ENCODE measurements at regions of chr14 and their contacts with region 1.

Region 1: DNA sequence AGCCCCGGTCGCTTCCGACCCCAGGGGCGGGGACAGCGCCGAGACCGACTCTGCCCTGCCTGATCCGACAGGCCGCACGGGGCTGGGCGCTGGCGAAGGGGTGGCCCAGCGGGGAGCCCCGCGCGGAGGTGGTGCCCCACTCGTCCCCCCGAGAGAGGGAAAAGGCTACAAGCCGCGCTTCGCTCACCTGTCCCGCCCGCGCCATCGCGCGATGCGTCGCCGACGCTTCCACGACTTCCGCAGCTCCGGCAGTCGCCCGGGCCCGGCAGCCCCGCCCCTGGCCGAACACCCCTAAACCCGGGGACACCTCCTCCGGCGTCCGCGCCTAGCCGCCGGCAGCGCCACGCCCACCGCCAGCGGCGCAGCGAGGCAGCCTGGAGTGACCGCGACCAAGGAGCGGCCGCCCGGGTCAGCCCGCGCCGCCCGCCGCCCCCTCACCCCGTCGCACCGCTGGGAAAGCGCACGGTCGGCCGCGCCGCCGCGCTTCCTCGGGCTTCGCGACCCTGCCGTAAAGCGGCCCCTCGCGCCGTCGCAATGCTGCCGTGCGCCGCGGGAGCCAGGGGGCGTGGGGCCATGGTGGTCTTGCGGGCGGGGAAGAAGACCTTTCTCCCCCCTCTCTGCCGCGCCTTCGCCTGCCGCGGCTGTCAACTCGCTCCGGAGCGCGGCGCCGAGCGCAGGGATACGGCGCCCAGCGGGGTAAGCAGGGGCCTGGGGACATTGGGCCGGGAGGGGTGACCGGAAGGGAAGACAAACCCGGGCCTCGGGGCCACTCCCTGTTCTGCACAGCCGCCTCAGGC is at the starts of genes BAG5 and COA8:
- DNase-seq: peak in 1 of 2 donors; percentile 90
- H3K4me3 ChIP-seq: peak within 1 kb of the TSS; percentile 81 to 90
- H3K27ac ChIP-seq: peak within 1 kb of the TSS; percentile 93 to 96
- H3K4me1 ChIP-seq: peaks cover 16 to 46% of the 10 kb centered on the region in 2 donors
- H3K27me3 ChIP-seq: no peaks in the 10 kb centered on the region
- CTCF ChIP-seq: peak in 2 of 3 experiments; percentile 9 to 28
- total RNA-seq, gene BAG5: 7.1 TPM
- total RNA-seq, gene COA8: 37.7 TPM

Region 2: GRCh38 chr14:103628684-103629502 is 66.3 kb after region 1 on chr14 and contains the start of gene KLC1:
- intact Hi-C with region 1: loop called (anchors 2 kb)
- DNase-seq: peak in 1 of 2 donors; percentile 88
- H3K4me3 ChIP-seq: peak within 1 kb of the TSS; percentile 78 to 80
- H3K27ac ChIP-seq: peak within 1 kb of the TSS; percentile 96 to 99
- H3K4me1 ChIP-seq: peaks cover 20 to 33% of the 10 kb centered on the region in 2 donors
- H3K27me3 ChIP-seq: no peaks in the 10 kb centered on the region
- CTCF ChIP-seq: no peak
- total RNA-seq, gene KLC1: 302 TPM